GM12878 (cell line): ENCODE measurements at regions of chr2 and their contacts with region 1.

Region 1: GRCh38 chr2:208392300-208393080 is 14.1 kb upstream of the PTH2R start:
- DNase-seq: no peak
- ATAC-seq: no peak
- H3K4me3 ChIP-seq: no peak overlapping the region
- H3K27ac ChIP-seq: no peak overlapping the region
- H3K4me1 ChIP-seq: no peaks in the 10 kb centered on the region
- H3K27me3 ChIP-seq: no peaks in the 10 kb centered on the region
- CTCF ChIP-seq: no peak
- EP300 ChIP-seq: no peak
- POLR2A ChIP-seq: no peak
- RAD21 ChIP-seq: no peak

Region 2: GRCh38 chr2:208373460-208374089 is 18.9 kb before region 1 on chr2:
- CTCF ChIA-PET with region 1: interaction called, 10 read pairs
- POLR2A ChIA-PET with region 1: no interaction called
- RAD21 ChIA-PET with region 1: no interaction called
- SMC1A ChIA-PET with region 1: interaction called, 5 read pairs
- in situ Hi-C with region 1: no loop called
- intact Hi-C with region 1: no loop called
- DNase-seq: no peak
- ATAC-seq: peak; percentile 75
- H3K4me3 ChIP-seq: no peak overlapping the region
- H3K27ac ChIP-seq: no peak overlapping the region
- H3K4me1 ChIP-seq: no peaks in the 10 kb centered on the region
- H3K27me3 ChIP-seq: no peaks in the 10 kb centered on the region
- CTCF ChIP-seq: peak; percentile 68 to 92 (median 77)
- EP300 ChIP-seq: no peak
- POLR2A ChIP-seq: no peak
- RAD21 ChIP-seq: peak; percentile 58

Region 3: GRCh38 chr2:209423562-209424198 is 1031.2 kb after region 1 on chr2 and contains the start of gene MAP2:
- CTCF ChIA-PET with region 1: interaction called, 3 read pairs
- POLR2A ChIA-PET with region 1: no interaction called
- RAD21 ChIA-PET with region 1: no interaction called
- SMC1A ChIA-PET with region 1: no interaction called
- in situ Hi-C with region 1: no loop called
- intact Hi-C with region 1: loop called (anchors 10 kb)
- DNase-seq: no peak
- ATAC-seq: peak; percentile 99
- H3K4me3 ChIP-seq: peak within 1 kb of the TSS; percentile 25; the same call in 1 of the 2 replicates
- H3K27ac ChIP-seq: no peak within 1 kb of the TSS
- H3K4me1 ChIP-seq: peaks cover 3% of the 10 kb centered on the region; the same call in 1 of the 2 replicates
- H3K27me3 ChIP-seq: no peaks in the 10 kb centered on the region; a peak in 2 of 4 replicates
- CTCF ChIP-seq: peak; percentile 52 to 86 (median 75)
- EP300 ChIP-seq: no peak
- POLR2A ChIP-seq: no peak
- RAD21 ChIP-seq: no peak
- polyA plus RNA-seq, gene MAP2: not detected

Region 4: GRCh38 chr2:209556354-209556961 is 1164.0 kb after region 1 on chr2:
- CTCF ChIA-PET with region 1: no interaction called
- POLR2A ChIA-PET with region 1: no interaction called
- RAD21 ChIA-PET with region 1: no interaction called
- SMC1A ChIA-PET with region 1: no interaction called
- in situ Hi-C with region 1: loop called (anchors 25 kb)
- intact Hi-C with region 1: no loop called
- DNase-seq: no peak
- ATAC-seq: peak; percentile 74
- H3K4me3 ChIP-seq: no peak overlapping the region
- H3K27ac ChIP-seq: no peak overlapping the region
- H3K4me1 ChIP-seq: no peaks in the 10 kb centered on the region
- H3K27me3 ChIP-seq: no peaks in the 10 kb centered on the region; a peak in 1 of 4 replicates
- CTCF ChIP-seq: peak; percentile 23 to 49 (median 31); a peak in 4 of 6 replicates
- EP300 ChIP-seq: no peak
- POLR2A ChIP-seq: no peak
- RAD21 ChIP-seq: peak; percentile 71